Right ventricle myocardium inferior (tissue), 1 donor: ENCODE measurements at regions of chr16 and their contacts with region 1.

Region 1: DNA sequence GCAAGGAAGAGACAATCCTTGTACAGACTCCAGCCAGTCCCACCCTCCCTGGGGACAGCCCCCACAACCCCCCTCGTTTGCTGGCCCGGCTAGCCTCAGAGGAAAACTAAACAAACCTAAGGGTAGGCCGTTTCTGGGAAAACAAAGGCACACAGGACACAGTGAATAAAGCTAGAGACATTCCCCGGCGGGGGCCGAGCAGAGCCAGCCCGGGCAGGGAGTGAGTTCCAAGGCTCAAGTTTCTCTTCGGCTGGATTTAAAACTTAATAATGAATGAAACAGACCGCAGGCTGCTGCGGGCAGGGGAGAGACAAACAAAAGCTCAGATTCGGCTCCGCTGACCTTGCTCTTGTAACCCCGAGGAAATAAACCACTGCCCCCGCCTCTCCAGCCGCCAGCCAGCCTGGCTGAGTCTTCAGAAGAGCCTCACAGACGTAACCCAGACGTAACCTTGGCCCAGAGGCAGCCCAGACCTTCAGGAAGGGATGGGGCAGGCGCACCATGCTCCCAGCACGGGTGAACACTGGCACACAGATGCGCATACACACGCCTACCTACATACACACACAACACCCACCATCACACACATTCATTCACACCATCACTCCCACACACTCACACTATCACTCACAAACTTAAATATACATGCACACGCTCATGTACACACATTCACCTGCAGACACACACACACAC is 216.0 kb downstream of the ZNF423 start:
- DNase-seq: no peak
- ATAC-seq: peak; percentile 60

Region 2: DNA sequence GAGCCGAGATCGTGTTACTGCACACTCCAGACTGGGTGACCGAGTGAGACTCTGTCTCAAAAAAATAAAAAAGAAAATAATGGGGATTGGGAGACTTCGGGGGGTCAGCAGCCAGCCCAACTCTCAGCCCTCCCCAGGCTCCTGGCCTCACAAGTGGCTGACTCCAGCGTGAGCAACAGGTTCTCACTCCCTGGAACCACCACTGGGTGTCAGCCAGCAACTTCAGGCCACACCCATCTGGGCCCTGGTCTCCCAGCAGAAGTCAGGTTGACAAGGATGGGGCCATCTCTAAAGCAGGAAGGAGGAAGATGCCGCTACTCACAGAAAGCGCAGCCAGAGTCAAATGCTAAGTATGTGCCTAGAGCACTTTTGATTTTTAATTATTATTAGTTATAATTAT is 126.8 kb before region 1 on chr16:
- intact Hi-C with region 1: no loop called
- DNase-seq: no peak
- ATAC-seq: no peak

Region 3: DNA sequence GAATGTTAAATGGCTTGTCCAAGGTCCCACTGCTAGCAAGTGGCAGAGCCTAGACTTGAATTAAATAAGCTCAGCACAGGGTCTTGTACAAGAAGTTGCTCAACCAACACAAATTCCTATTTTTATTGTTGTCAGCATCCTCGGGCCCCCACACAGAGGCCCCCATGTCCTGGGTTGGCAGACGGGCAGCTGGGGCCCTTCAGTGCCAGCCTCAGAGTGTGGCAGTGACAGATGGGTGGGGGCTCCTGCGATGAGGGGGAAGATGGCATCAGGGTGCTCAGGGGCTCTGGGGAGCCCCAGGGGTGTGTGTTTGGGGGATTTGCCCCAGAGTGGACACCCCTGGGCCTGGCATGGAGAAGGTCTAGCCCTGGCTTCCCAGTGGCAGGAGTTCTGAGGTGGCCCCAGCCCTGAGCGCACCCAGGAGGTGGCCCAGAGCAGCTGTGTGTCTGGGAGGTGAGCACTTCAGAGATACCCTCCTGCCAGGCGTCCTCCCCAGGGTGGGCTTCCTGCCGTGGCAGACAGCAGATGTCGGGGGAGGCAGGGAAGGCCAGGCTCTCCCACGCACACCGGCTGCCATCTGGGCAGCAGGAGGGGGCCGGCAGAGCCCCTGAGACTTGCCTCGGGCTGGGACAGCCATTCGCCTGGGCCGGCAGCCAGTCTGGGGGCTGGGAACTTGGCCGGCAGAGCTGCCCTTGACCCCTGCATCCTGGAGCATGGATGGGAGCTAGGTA is 115.5 kb before region 1 on chr16:
- intact Hi-C with region 1: no loop called
- DNase-seq: no peak
- ATAC-seq: no peak

Region 4: GRCh38 chr16:49617016-49617629 is 22.8 kb before region 1 on chr16:
- intact Hi-C with region 1: loop called (anchors 1 kb)
- DNase-seq: no peak
- ATAC-seq: no peak

Region 5: DNA sequence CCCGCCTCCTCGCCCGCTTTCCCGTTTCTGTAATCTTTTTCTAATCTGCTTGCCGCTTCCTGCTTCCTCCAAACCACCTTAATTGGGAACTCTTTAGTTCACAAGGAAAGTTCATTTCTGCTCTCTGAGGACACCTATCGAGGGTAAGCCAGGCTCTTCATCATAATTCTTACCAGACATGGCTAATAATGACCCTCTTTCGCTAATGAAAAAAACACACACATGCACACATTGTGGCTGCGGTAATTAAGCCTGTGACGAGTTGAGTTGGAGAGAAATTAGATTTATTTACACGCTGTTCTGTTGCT is 115.4 kb after region 1 on chr16:
- intact Hi-C with region 1: loop called (anchors 10 kb)
- DNase-seq: no peak
- ATAC-seq: peak; percentile 36